ENCODE measurements at regions of chr17 and their contacts with region 1.

Region 1: DNA sequence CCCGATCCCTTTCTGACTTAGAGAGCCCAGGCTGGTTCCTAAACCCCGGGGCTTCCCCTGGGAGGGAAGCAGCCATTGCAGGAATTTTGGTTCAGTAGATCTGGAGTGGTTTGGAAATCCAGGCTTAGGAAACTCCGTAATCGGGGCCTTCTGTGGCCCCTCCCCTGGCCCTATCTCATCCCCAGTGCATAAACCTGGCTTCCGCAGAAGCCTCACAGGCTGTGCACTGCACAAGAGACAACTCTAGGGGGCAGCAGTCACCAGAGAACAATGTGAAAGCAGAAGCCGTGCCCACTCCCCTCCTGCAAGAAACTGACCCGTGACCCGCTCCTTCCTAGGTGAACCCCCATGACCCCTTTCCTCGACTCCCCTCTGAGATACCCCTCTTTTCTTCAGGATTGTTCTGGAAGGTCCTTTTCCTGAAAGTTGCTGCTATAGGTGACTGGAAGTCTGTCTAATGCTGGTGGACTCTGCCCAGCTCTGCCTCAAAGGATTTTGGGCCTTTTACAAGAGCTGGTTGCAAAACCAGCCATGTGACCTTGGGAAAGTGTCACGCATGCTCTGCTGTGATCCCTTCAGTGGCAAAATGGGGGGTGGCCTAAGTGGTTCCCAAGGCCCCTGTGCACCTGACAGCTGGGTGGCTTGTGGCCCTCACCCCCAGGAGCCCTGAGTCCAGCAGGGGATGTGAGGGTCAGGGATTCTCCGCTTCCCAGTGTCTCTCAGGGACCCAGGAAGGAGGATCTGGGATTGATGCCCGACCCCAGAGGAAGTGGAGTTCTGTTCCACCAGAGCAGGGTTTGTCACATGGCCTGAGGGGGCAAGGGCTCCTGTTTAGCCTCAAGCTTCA is 14.4 kb downstream of the GUCY2D start:
- DNase-seq: peak; percentile 82
- H3K4me3 ChIP-seq: peak overlapping the region; percentile 45 to 53
- H3K27ac ChIP-seq: no peak overlapping the region
- H3K4me1 ChIP-seq: peaks cover 0 to 15% of the 10 kb centered on the region in 2 experiments; a peak in 1 of 4 replicates
- H3K27me3 ChIP-seq: no peaks in the 10 kb centered on the region
- CTCF ChIP-seq: peak; percentile 72
- EP300 ChIP-seq: no peak
- RAD21 ChIP-seq: peak; percentile 76

Region 2: DNA sequence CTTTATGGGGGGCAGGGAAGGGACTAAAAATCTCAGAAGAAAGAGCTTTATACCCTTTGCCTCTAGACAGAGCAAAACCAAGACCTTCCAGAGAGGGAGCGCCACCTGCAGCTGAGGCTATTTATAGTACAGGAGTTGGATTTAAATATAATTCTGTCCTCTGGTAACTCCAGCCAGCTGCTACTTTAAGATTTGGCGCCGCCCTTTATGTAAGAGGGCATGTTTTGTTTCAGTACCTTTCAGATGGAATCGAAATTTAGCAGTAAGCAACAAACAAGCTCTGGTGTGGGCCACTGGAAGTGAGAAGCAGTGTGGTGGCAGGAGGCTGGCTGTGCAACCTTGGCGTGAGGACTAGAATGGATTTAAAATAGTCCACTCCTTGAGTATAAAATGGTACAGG is 19.7 kb before region 1 on chr17:
- CTCF ChIA-PET with region 1: interaction called, 19 read pairs
- POLR2A ChIA-PET with region 1: no interaction called
- DNase-seq: no peak
- H3K4me3 ChIP-seq: no peak overlapping the region
- H3K27ac ChIP-seq: no peak overlapping the region
- H3K4me1 ChIP-seq: peaks cover 0 to 2% of the 10 kb centered on the region in 2 experiments; a peak in 1 of 4 replicates
- H3K27me3 ChIP-seq: peaks cover 12% of the 10 kb centered on the region; the same call in 1 of the 2 replicates
- CTCF ChIP-seq: 0 out of 2 replicates have a peak, but pooled peaks have one; percentile 36
- EP300 ChIP-seq: no peak
- RAD21 ChIP-seq: no peak

Region 3: GRCh38 chr17:8029135-8029534 is 12.3 kb after region 1 on chr17:
- CTCF ChIA-PET with region 1: interaction called, 53 read pairs
- POLR2A ChIA-PET with region 1: no interaction called
- DNase-seq: no peak
- H3K4me3 ChIP-seq: no peak overlapping the region
- H3K27ac ChIP-seq: no peak overlapping the region
- H3K4me1 ChIP-seq: no peaks in the 10 kb centered on the region
- H3K27me3 ChIP-seq: peaks cover 20% of the 10 kb centered on the region
- CTCF ChIP-seq: no peak
- EP300 ChIP-seq: no peak
- RAD21 ChIP-seq: no peak